Naive thymus-derived CD4-positive, alpha-beta T cell (primary cell): ENCODE measurements at regions of chr16 and their contacts with region 1.

Region 1: GRCh38 chr16:22206013-22206841 is at the start of gene EEF2K:
- DNase-seq: peak; percentile 44 to 83 (median 66)
- ATAC-seq: peak; percentile 94
- H3K4me3 ChIP-seq: peak within 1 kb of the TSS; percentile 72
- H3K4me3 Mint-ChIP-seq: peak within 1 kb of the TSS; percentile 87 to 99 (median 96)
- H3K27ac ChIP-seq: peak within 1 kb of the TSS; percentile 80
- H3K27ac Mint-ChIP-seq: peak within 1 kb of the TSS; percentile 66 to 94 (median 85)
- H3K4me1 ChIP-seq: peaks cover 9 to 13% of the 10 kb centered on the region in 2 donors
- H3K4me1 Mint-ChIP-seq: peaks cover 14 to 56% (median 28%) of the 10 kb centered on the region in 7 donors
- H3K27me3 ChIP-seq: no peaks in the 10 kb centered on the region
- H3K27me3 Mint-ChIP-seq: no peaks in the 10 kb centered on the region
- total RNA-seq, gene EEF2K: 15.3 to 27.9 (median 21.8) TPM

Region 2: GRCh38 chr16:22139008-22139407 is 67.2 kb before region 1 on chr16:
- CTCF ChIA-PET with region 1: no interaction called
- POLR2A ChIA-PET with region 1: no interaction called
- intact Hi-C with region 1: no loop called
- DNase-seq: no peak
- ATAC-seq: no peak
- H3K4me3 ChIP-seq: no peak overlapping the region
- H3K4me3 Mint-ChIP-seq: no peak overlapping the region
- H3K27ac ChIP-seq: no peak overlapping the region
- H3K27ac Mint-ChIP-seq: no peak overlapping the region
- H3K4me1 ChIP-seq: no peaks in the 10 kb centered on the region
- H3K4me1 Mint-ChIP-seq: no peaks in the 10 kb centered on the region
- H3K27me3 ChIP-seq: no peaks in the 10 kb centered on the region
- H3K27me3 Mint-ChIP-seq: peaks cover 0 to 7% (median 0%) of the 10 kb centered on the region in 5 donors

Region 3: GRCh38 chr16:22240023-22240710 is 33.9 kb after region 1 on chr16:
- CTCF ChIA-PET with region 1: no interaction called
- POLR2A ChIA-PET with region 1: interaction called, 4 read pairs
- intact Hi-C with region 1: loop called (anchors 1 kb)
- DNase-seq: no peak
- ATAC-seq: no peak
- H3K4me3 ChIP-seq: no peak overlapping the region
- H3K4me3 Mint-ChIP-seq: peak overlapping the region in 4 of 10 donors; percentile 18 to 35 (median 22)
- H3K27ac ChIP-seq: no peak overlapping the region
- H3K27ac Mint-ChIP-seq: peak overlapping the region; percentile 12 to 95 (median 77)
- H3K4me1 ChIP-seq: peaks cover 12 to 30% of the 10 kb centered on the region in 2 donors
- H3K4me1 Mint-ChIP-seq: peaks cover 18 to 39% (median 33%) of the 10 kb centered on the region in 7 donors
- H3K27me3 ChIP-seq: no peaks in the 10 kb centered on the region
- H3K27me3 Mint-ChIP-seq: no peaks in the 10 kb centered on the region